ENCODE measurements at regions of chr2 and their contacts with region 1.

Region 1: GRCh38 chr2:219689676-219690628 is 62.5 kb downstream of the SLC4A3 start:
- DNase-seq: no peak
- ATAC-seq: no peak
- H3K4me3 ChIP-seq: peak overlapping the region; percentile 61 to 72
- H3K27ac ChIP-seq: peak overlapping the region; percentile 98
- H3K4me1 ChIP-seq: peaks cover 61 to 96% of the 10 kb centered on the region in 2 experiments
- H3K27me3 ChIP-seq: no peaks in the 10 kb centered on the region
- CTCF ChIP-seq: peak in 2 of 3 experiments; percentile 31 to 73; a peak in 4 of 6 replicates
- POLR2A ChIP-seq: no peak
- RAD21 ChIP-seq: no peak

Region 2: DNA sequence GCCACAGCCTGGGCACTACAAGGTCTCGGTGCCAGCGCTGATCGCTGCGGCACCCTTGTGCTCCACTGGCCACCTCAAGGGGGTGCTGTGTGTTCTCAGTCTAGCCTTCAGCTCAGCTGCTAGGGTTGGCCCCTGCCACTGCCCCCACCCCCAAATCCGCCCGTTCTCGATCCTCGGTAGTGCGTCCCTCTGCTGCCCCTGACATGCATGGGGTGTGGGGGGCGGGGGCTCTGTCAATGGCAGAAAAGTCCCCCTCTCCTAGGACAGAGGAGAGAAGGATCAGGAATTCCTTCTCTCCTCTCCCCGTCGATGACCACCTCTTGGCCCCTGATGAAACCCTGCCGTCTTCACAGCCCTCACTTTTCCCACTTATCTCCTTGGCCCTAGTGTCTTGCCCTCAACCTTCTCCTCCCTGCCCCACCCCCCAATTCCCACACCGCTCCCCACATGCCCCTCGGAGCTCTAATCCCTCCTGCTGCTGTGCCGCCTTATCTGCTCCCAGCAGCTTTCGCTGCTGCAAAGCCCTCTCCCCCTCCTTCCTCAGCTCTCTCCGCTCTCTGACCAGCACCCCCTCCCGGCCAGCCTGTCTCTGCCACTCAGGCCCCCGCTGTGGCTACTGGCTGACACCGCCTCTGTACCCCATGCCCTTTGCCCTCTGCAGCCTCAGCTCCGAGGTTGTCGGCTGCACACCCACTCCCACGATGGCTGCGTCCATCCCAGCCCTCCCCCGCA is 180.0 kb before region 1 on chr2:
- CTCF ChIA-PET with region 1: no interaction called
- POLR2A ChIA-PET with region 1: no interaction called
- RAD21 ChIA-PET with region 1: no interaction called
- intact Hi-C with region 1: no loop called
- DNase-seq: no peak
- ATAC-seq: peak; percentile 90
- H3K4me3 ChIP-seq: 0 out of 4 replicates have a peak overlapping the region, but pooled peaks of 1 of the 2 experiments have one; percentile 2
- H3K27ac ChIP-seq: no peak overlapping the region
- H3K4me1 ChIP-seq: peaks cover 0 to 19% of the 10 kb centered on the region in 2 experiments; a peak in 2 of 4 replicates
- H3K27me3 ChIP-seq: no peaks in the 10 kb centered on the region
- CTCF ChIP-seq: peak; percentile 59 to 91 (median 80); a peak in 5 of 6 replicates
- POLR2A ChIP-seq: no peak
- RAD21 ChIP-seq: peak; percentile 70

Region 3: GRCh38 chr2:219597552-219598307 is 92.2 kb before region 1 on chr2 and contains the start of gene STK11IP:
- CTCF ChIA-PET with region 1: no interaction called
- POLR2A ChIA-PET with region 1: interaction called, 6 read pairs
- RAD21 ChIA-PET with region 1: no interaction called
- intact Hi-C with region 1: loop called (anchors 2 kb)
- DNase-seq: peak; percentile 95
- ATAC-seq: peak; percentile 95
- H3K4me3 ChIP-seq: peak within 1 kb of the TSS; percentile 94 to 95
- H3K27ac ChIP-seq: peak within 1 kb of the TSS; percentile 86
- H3K4me1 ChIP-seq: peaks cover 8 to 28% of the 10 kb centered on the region in 2 experiments; a peak in 3 of 4 replicates
- H3K27me3 ChIP-seq: no peaks in the 10 kb centered on the region
- CTCF ChIP-seq: no peak
- POLR2A ChIP-seq: peak; percentile 76
- RAD21 ChIP-seq: no peak
- total RNA-seq, gene STK11IP: 45.0 TPM

Region 4: GRCh38 chr2:219642465-219643080 is 47.4 kb before region 1 on chr2:
- CTCF ChIA-PET with region 1: interaction called, 16 read pairs
- POLR2A ChIA-PET with region 1: interaction called, 10 read pairs
- RAD21 ChIA-PET with region 1: no interaction called
- intact Hi-C with region 1: loop called (anchors 1 kb)
- DNase-seq: peak; percentile 88
- ATAC-seq: peak; percentile 78
- H3K4me3 ChIP-seq: no peak overlapping the region
- H3K27ac ChIP-seq: peak overlapping the region; percentile 47
- H3K4me1 ChIP-seq: peaks cover 24 to 56% of the 10 kb centered on the region in 2 experiments
- H3K27me3 ChIP-seq: no peaks in the 10 kb centered on the region
- CTCF ChIP-seq: peak; percentile 98 to 100 (median 99)
- POLR2A ChIP-seq: no peak
- RAD21 ChIP-seq: peak; percentile 97